ENCODE measurements at regions of chr20 and their contacts with region 1.

Region 1: GRCh38 chr20:62136283-62137091 is 6.7 kb downstream of the PSMA7 start:
- DNase-seq: peak; percentile 65
- H3K4me3 ChIP-seq: no peak overlapping the region
- H3K27ac ChIP-seq: no peak overlapping the region
- H3K4me1 ChIP-seq: peaks cover 6% of the 10 kb centered on the region
- H3K27me3 ChIP-seq: no peaks in the 10 kb centered on the region
- CTCF ChIP-seq: peak; percentile 28 to 78 (median 72)
- POLR2A ChIP-seq: no peak

Region 2: GRCh38 chr20:61407561-61407960 is 728.9 kb before region 1 on chr20:
- intact Hi-C with region 1: no loop called
- DNase-seq: no peak
- H3K4me3 ChIP-seq: no peak overlapping the region
- H3K27ac ChIP-seq: no peak overlapping the region
- H3K4me1 ChIP-seq: no peaks in the 10 kb centered on the region
- H3K27me3 ChIP-seq: no peaks in the 10 kb centered on the region
- CTCF ChIP-seq: no peak
- POLR2A ChIP-seq: no peak

Region 3: DNA sequence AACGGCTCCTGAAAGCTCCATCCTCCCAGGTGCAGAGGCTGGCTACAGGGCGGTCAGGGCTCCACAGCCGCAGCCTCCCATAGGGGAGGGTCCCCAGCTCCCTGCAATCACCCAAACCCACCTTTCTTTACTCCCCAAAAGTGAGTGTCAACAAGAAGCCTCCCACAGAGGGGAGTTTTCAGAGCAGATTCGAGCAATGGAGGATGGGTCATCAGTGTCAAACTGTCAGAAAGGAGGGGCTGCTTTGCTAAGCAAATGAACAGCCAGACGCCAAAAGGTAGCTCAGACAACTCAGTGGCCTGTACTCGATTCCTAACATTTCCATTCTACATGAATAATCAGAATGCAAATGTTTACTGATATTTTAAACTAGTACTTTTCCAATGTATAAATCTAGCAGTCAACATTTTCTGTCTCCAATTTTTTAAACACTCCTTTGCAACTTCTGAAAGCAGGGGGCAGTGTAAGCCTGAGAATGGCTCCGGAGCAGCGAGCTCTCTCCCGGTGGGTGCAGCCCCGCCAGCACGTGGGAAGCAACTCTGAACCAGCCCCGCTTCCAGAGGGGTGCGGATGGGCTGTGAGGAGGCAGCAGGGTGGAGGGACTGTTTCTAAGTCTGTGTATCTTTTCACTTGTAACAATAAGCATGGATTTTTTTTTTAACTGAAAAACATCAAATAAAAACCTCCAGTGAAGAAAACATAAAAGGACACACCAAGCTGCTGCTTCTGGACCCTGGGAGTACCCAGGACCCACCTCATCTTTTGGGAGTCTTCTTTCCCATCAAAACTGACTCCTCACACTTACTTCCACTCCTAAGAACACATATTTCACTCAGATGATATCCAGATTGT is 125.7 kb before region 1 on chr20:
- intact Hi-C with region 1: loop called (anchors 5 kb)
- DNase-seq: peak; percentile 43
- H3K4me3 ChIP-seq: no peak overlapping the region
- H3K27ac ChIP-seq: no peak overlapping the region
- H3K4me1 ChIP-seq: no peaks in the 10 kb centered on the region
- H3K27me3 ChIP-seq: no peaks in the 10 kb centered on the region
- CTCF ChIP-seq: peak; percentile 22 to 79 (median 63)
- POLR2A ChIP-seq: no peak

Region 4: DNA sequence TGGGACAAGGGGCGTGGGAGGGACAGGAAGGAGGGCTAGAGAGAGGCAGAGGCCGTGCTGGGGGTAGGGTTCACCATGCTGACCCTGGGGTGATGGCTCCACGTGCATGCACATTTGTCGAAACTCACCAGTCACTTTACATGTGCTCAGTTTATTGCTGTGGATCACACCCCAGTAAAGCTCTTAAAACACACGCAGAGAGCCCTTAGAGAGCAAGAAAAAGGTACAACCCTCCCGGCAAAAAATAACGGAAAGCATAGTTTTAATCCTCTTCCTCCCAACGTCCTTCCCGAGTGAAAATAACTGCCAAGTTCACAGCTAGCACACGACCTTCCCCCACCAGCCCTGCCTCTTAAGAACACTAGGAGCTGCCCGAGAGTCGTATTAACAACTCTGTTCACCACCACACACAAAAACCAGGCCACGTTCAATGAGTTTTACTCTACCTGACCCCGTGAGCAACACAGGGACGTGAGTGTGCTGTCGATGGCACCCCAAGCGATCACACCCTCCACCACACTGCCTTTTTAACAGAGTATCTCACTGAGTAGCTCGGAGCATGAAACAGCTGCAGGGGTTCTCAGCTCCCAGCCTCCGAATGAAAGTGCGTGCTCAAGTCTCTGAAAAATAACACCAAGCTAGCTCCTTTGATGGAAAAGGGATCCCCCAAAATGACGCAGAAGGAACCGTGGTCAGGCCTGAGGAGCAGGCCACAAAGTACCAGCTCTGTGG is 110.5 kb before region 1 on chr20:
- intact Hi-C with region 1: loop called (anchors 2 kb)
- DNase-seq: no peak
- H3K4me3 ChIP-seq: no peak overlapping the region
- H3K27ac ChIP-seq: no peak overlapping the region
- H3K4me1 ChIP-seq: peaks cover 3% of the 10 kb centered on the region
- H3K27me3 ChIP-seq: no peaks in the 10 kb centered on the region
- CTCF ChIP-seq: peak in 2 of 4 experiments; percentile 18 to 36
- POLR2A ChIP-seq: no peak

Region 5: GRCh38 chr20:62165762-62166399 is 29.4 kb after region 1 on chr20:
- intact Hi-C with region 1: no loop called
- DNase-seq: no peak
- H3K4me3 ChIP-seq: no peak overlapping the region
- H3K27ac ChIP-seq: no peak overlapping the region
- H3K4me1 ChIP-seq: no peaks in the 10 kb centered on the region
- H3K27me3 ChIP-seq: no peaks in the 10 kb centered on the region
- CTCF ChIP-seq: no peak
- POLR2A ChIP-seq: no peak

Region 6: DNA sequence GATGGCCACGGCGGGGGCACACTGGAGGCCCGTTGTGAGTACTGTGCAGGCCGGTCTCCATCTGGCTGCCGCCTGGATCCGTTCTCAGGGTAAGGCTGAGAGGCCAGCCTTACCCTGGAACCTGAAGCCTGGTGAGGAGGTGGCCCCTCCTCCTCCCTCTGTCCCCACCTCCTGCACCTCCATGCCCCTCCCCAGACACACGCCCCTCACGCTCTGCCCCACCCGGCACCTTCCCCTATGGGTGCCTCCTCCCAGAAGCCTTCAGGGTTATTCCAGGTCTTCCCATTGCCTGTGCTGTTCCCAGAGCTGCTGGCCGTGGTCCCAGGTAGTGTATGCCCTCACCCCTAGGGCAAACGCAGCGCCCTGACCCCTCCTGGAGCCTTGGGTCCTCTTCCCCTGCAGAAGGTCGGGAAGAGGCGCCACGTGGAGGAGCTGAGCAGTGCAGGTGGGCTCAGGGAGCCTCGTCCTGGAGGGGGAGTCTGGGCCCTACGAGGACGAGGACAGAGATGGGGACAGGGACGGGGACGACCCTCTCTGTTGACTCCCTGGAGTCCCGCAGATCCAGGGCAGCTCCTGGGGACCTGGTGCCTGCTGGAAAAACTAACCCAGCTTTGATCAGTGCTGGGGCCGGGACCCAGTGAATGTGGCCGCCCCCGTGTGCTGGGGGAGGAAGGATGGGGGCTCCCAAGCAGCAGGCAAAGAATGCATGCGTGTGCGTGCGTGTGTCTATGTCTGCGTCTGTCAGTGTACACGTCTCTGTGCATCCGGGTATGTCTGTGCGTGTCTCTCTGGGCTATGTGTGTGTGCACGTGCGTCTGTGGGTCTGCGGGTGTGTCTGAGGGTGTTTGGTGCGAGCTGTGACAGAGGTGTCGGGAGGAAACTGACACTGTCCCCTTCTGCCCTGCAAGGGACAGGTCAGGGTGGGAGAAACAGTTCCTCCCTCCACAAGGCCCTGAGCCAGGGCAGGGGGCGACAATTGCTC is 91.8 kb after region 1 on chr20:
- intact Hi-C with region 1: no loop called
- DNase-seq: no peak
- H3K4me3 ChIP-seq: no peak overlapping the region
- H3K27ac ChIP-seq: no peak overlapping the region
- H3K4me1 ChIP-seq: peaks cover 9% of the 10 kb centered on the region
- H3K27me3 ChIP-seq: peaks cover under 1% of the 10 kb centered on the region
- CTCF ChIP-seq: no peak
- POLR2A ChIP-seq: no peak

Measured in prostate gland (tissue), 2 donors.